ENCODE measurements at regions of chr6 and their contacts with region 1.

Region 1: GRCh38 chr6:148947621-148948444 is 201.0 kb downstream of the UST start:
- DNase-seq: peak; percentile 60
- ATAC-seq: peak; percentile 98
- H3K4me3 ChIP-seq: no peak overlapping the region
- H3K27ac ChIP-seq: no peak overlapping the region
- H3K4me1 ChIP-seq: 0 out of 4 replicates have a peak, but pooled peaks cover 0 to 2% of the 10 kb centered on the region in 2 experiments
- H3K27me3 ChIP-seq: no peaks in the 10 kb centered on the region
- CTCF ChIP-seq: peak; percentile 80 to 87 (median 86)
- POLR2A ChIP-seq: no peak
- RAD21 ChIP-seq: peak; percentile 78

Region 2: GRCh38 chr6:148559848-148560433 is 387.9 kb before region 1 on chr6:
- CTCF ChIA-PET with region 1: no interaction called
- POLR2A ChIA-PET with region 1: no interaction called
- RAD21 ChIA-PET with region 1: no interaction called
- intact Hi-C with region 1: loop called (anchors 1 kb)
- DNase-seq: peak; percentile 26
- ATAC-seq: peak; percentile 97
- H3K4me3 ChIP-seq: peak overlapping the region; percentile 23 to 54
- H3K27ac ChIP-seq: no peak overlapping the region
- H3K4me1 ChIP-seq: peaks cover 0 to 6% of the 10 kb centered on the region in 2 experiments; a peak in 2 of 4 replicates
- H3K27me3 ChIP-seq: no peaks in the 10 kb centered on the region
- CTCF ChIP-seq: peak; percentile 84 to 94 (median 94)
- POLR2A ChIP-seq: no peak
- RAD21 ChIP-seq: peak; percentile 88

Region 3: GRCh38 chr6:148746363-148747144 is 201.3 kb before region 1 on chr6 and contains the start of gene UST:
- CTCF ChIA-PET with region 1: no interaction called
- POLR2A ChIA-PET with region 1: no interaction called
- RAD21 ChIA-PET with region 1: no interaction called
- intact Hi-C with region 1: loop called (anchors 2 kb)
- DNase-seq: peak; percentile 64
- ATAC-seq: peak; percentile 84
- H3K4me3 ChIP-seq: peak within 1 kb of the TSS; percentile 76 to 78
- H3K27ac ChIP-seq: peak within 1 kb of the TSS; percentile 73
- H3K4me1 ChIP-seq: peaks cover 8 to 15% of the 10 kb centered on the region in 2 experiments
- H3K27me3 ChIP-seq: no peaks in the 10 kb centered on the region
- CTCF ChIP-seq: peak; percentile 46 to 50 (median 49); a peak in 5 of 6 replicates
- POLR2A ChIP-seq: no peak
- RAD21 ChIP-seq: peak; percentile 66
- total RNA-seq, gene UST: 6.1 TPM